ENCODE measurements at regions of chr3 and their contacts with region 1.

Region 1: GRCh38 chr3:4633078-4634004 is 140.2 kb downstream of the ITPR1 start:
- DNase-seq: peak; percentile 66
- H3K4me3 ChIP-seq: no peak overlapping the region; a peak in 1 of 4 replicates
- H3K27ac ChIP-seq: no peak overlapping the region
- H3K4me1 ChIP-seq: no peaks in the 10 kb centered on the region
- H3K27me3 ChIP-seq: no peaks in the 10 kb centered on the region
- CTCF ChIP-seq: peak; percentile 94
- EP300 ChIP-seq: no peak
- RAD21 ChIP-seq: peak; percentile 96

Region 2: DNA sequence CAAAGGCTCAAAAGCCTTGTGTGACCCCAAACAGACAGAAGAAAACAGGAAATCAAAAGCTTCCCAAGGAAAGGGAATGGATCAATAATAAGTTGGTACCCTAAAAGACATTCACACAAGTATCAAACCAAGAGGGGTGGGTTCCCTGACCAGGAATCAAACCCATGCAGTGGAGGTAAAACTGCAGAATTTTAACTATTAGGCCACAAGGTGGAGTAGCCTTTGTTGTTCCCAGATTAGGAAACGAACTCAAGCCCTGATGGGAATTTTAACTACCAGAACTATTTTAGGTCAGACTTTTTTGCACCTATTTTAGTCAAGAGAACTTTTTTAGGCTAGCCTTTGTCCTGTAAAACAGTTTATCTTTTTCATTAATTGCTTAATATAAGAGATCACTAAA is 298.8 kb before region 1 on chr3:
- CTCF ChIA-PET with region 1: interaction called, 21 read pairs
- POLR2A ChIA-PET with region 1: no interaction called
- DNase-seq: no peak
- H3K4me3 ChIP-seq: no peak overlapping the region
- H3K27ac ChIP-seq: no peak overlapping the region
- H3K4me1 ChIP-seq: no peaks in the 10 kb centered on the region
- H3K27me3 ChIP-seq: no peaks in the 10 kb centered on the region
- CTCF ChIP-seq: peak; percentile 24; the same call in 1 of the 2 replicates
- EP300 ChIP-seq: no peak
- RAD21 ChIP-seq: no peak

Region 3: GRCh38 chr3:4350789-4351163 is 282.6 kb before region 1 on chr3:
- CTCF ChIA-PET with region 1: interaction called, 117 read pairs
- POLR2A ChIA-PET with region 1: interaction called, 3 read pairs
- DNase-seq: peak; percentile 64
- H3K4me3 ChIP-seq: no peak overlapping the region
- H3K27ac ChIP-seq: no peak overlapping the region
- H3K4me1 ChIP-seq: peaks cover 0 to 11% of the 10 kb centered on the region in 2 experiments; a peak in 2 of 4 replicates
- H3K27me3 ChIP-seq: no peaks in the 10 kb centered on the region
- CTCF ChIP-seq: peak; percentile 87
- EP300 ChIP-seq: no peak
- RAD21 ChIP-seq: peak; percentile 95

Region 4: DNA sequence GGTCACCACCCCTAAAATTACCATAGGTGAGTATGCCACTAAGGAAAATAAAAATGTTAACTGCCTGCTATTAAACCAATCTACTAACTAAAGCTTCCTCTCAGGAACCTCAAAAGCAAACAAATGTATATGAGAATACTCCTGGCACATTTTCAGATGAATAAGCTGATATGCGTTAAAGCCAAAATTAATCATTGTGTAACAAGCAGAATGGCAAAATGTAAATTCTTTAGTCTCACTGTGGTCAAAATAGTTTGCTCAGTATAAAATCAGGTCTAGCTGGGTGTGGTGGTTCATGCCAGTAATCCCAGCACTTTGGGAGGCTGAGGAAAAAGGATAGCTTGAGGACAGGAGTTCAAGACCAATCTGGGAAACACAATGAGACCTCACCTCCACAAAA is 219.9 kb before region 1 on chr3:
- CTCF ChIA-PET with region 1: interaction called, 11 read pairs
- POLR2A ChIA-PET with region 1: no interaction called
- DNase-seq: no peak
- H3K4me3 ChIP-seq: no peak overlapping the region
- H3K27ac ChIP-seq: no peak overlapping the region
- H3K4me1 ChIP-seq: peaks cover 18 to 19% of the 10 kb centered on the region in 2 experiments
- H3K27me3 ChIP-seq: no peaks in the 10 kb centered on the region
- CTCF ChIP-seq: no peak
- EP300 ChIP-seq: no peak
- RAD21 ChIP-seq: no peak

Region 5: GRCh38 chr3:4504340-4505261 is 128.7 kb before region 1 on chr3:
- CTCF ChIA-PET with region 1: interaction called, 17 read pairs
- POLR2A ChIA-PET with region 1: no interaction called
- DNase-seq: peak; percentile 61
- H3K4me3 ChIP-seq: peak overlapping the region; percentile 15 to 55; a peak in 3 of 4 replicates
- H3K27ac ChIP-seq: peak overlapping the region; percentile 39 to 89; a peak in 3 of 4 replicates
- H3K4me1 ChIP-seq: peaks cover 9 to 54% of the 10 kb centered on the region in 2 experiments; a peak in 2 of 4 replicates
- H3K27me3 ChIP-seq: no peaks in the 10 kb centered on the region
- CTCF ChIP-seq: no peak
- EP300 ChIP-seq: peak in 1 of 2 experiments; percentile 84; a peak in 2 of 4 replicates
- RAD21 ChIP-seq: peak; percentile 18

Region 6: DNA sequence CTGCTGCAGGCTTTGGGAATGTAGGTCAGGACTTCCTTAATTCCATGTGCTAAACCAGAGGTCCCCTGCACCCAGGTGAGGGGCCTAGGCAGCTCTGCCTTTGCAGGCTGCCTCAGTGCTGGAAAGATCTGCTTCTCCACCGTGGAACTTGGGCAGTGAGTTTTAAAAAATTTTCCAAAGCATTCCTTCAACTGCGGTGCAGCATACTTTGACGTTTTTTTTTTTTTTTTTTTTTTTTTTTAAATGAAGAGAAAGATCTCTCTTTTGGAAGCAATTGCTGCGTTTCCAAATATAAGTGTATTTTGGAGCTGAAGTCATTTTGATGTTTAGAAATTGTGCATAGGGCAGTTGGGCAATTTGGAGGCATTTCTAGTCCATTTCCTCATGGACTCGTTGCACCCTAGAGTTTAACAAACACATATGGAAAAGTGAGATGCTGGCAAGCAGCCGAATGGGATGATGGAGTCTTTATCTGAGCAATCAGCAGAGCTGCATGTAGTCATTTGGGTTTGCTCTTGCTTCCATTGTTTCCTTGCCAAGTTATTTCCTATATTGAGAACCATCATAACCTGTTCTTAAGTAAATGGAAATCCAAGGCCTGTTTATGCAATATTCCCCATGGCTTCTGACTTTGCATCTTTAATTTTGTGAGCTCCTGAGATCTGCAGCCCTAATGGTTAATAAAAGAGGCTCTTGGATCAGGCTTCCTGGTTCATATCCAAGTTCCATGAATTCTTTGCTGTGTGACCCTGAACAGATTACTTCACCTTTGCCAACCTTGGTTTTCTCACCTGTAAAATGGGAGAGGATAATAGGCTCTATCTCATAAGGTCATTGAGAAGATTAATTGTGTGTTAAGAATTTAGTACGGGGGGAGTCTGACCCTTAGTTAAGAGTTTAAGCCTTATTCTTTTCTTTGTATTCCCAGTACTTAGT is 109.0 kb before region 1 on chr3:
- CTCF ChIA-PET with region 1: interaction called, 17 read pairs
- POLR2A ChIA-PET with region 1: interaction called, 5 read pairs
- DNase-seq: peak; percentile 50
- H3K4me3 ChIP-seq: peak overlapping the region in 1 of 2 experiments; percentile 4; a peak in 1 of 4 replicates
- H3K27ac ChIP-seq: peak overlapping the region; percentile 62 to 97
- H3K4me1 ChIP-seq: peaks cover 6 to 42% of the 10 kb centered on the region in 2 experiments; a peak in 2 of 4 replicates
- H3K27me3 ChIP-seq: no peaks in the 10 kb centered on the region
- CTCF ChIP-seq: no peak
- EP300 ChIP-seq: peak; percentile 84 to 97; a peak in 3 of 4 replicates
- RAD21 ChIP-seq: peak; percentile 43; the same call in 1 of the 2 replicates

Region 7: GRCh38 chr3:4600493-4600892 is 32.8 kb before region 1 on chr3:
- CTCF ChIA-PET with region 1: interaction called, 11 read pairs
- POLR2A ChIA-PET with region 1: no interaction called
- DNase-seq: no peak
- H3K4me3 ChIP-seq: no peak overlapping the region
- H3K27ac ChIP-seq: no peak overlapping the region
- H3K4me1 ChIP-seq: peaks cover 0 to 21% of the 10 kb centered on the region in 2 experiments; a peak in 2 of 4 replicates
- H3K27me3 ChIP-seq: no peaks in the 10 kb centered on the region
- CTCF ChIP-seq: no peak
- EP300 ChIP-seq: no peak
- RAD21 ChIP-seq: no peak

Region 8: DNA sequence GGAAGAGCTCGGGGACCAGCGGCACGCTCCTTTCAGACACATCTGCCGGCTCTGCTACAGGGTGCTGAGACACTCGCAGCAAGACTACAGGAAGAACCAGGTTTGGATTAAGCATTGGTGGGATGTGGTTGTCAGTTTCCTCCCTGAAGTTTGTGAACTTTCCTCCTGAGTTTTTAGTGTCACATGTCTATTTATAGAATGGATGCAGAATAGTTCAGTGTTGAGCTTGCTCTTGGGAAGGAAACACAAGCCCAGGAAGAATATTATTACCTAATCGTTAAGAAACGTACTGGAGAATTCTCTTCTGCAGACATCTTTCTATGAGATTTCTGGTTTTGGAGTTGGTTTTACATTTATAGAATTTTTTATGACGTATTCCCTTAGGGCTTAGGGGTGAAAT is 31.9 kb after region 1 on chr3:
- CTCF ChIA-PET with region 1: no interaction called
- POLR2A ChIA-PET with region 1: no interaction called
- DNase-seq: no peak
- H3K4me3 ChIP-seq: no peak overlapping the region
- H3K27ac ChIP-seq: no peak overlapping the region
- H3K4me1 ChIP-seq: no peaks in the 10 kb centered on the region
- H3K27me3 ChIP-seq: no peaks in the 10 kb centered on the region
- CTCF ChIP-seq: no peak
- EP300 ChIP-seq: no peak
- RAD21 ChIP-seq: no peak

Region 9: GRCh38 chr3:4834403-4834866 is 201.1 kb after region 1 on chr3:
- CTCF ChIA-PET with region 1: no interaction called
- POLR2A ChIA-PET with region 1: no interaction called
- DNase-seq: no peak
- H3K4me3 ChIP-seq: no peak overlapping the region
- H3K27ac ChIP-seq: no peak overlapping the region
- H3K4me1 ChIP-seq: peaks cover 7 to 26% of the 10 kb centered on the region in 2 experiments; a peak in 1 of 4 replicates
- H3K27me3 ChIP-seq: no peaks in the 10 kb centered on the region
- CTCF ChIP-seq: no peak
- EP300 ChIP-seq: no peak
- RAD21 ChIP-seq: no peak